Tibial artery (tissue), 4 donors: ENCODE measurements at regions of chr3 and their contacts with region 1.

Region 1: GRCh38 chr3:184371570-184372018 is 6.4 kb downstream of the THPO start:
- DNase-seq: peak; percentile 74 to 88
- H3K4me3 ChIP-seq: no peak overlapping the region
- H3K27ac ChIP-seq: no peak overlapping the region
- H3K4me1 ChIP-seq: peaks cover 0 to 39% (median 21%) of the 10 kb centered on the region in 4 donors
- H3K27me3 ChIP-seq: no peaks in the 10 kb centered on the region
- CTCF ChIP-seq: peak; percentile 94 to 97

Region 2: GRCh38 chr3:184250167-184250828 is 121.3 kb before region 1 on chr3:
- intact Hi-C with region 1: no loop called
- DNase-seq: peak; percentile 89 to 90
- H3K4me3 ChIP-seq: peak overlapping the region; percentile 70 to 71
- H3K27ac ChIP-seq: peak overlapping the region; percentile 67 to 82
- H3K4me1 ChIP-seq: peaks cover 0 to 21% (median 17%) of the 10 kb centered on the region in 4 donors
- H3K27me3 ChIP-seq: no peaks in the 10 kb centered on the region
- CTCF ChIP-seq: peak; percentile 77 to 94

Region 3: DNA sequence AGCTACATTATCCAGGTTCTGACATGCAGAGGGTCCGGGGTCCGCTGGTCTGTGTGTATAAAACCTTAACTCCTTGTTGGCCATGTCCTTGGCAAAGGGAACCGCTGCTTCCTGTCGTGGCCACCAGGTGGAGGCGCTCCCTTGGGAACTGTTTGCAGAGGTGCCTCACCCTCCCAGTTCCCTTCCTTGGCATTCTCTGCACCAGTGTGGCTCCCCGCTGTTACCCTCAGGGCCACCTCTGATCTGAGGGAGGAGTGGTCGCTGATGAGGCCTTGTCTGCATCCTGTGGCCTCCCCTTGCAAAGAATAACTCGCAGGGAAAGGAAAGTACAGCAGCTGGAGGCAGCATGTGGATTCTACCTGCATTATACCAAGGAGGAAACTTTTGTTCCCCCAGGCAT is 97.8 kb after region 1 on chr3:
- intact Hi-C with region 1: loop called (anchors 5 kb)
- DNase-seq: peak; percentile 28 to 61
- H3K4me3 ChIP-seq: no peak overlapping the region
- H3K27ac ChIP-seq: no peak overlapping the region
- H3K4me1 ChIP-seq: no peaks in the 10 kb centered on the region
- H3K27me3 ChIP-seq: peaks cover 0 to 21% of the 10 kb centered on the region in 2 donors
- CTCF ChIP-seq: peak; percentile 12 to 15

Region 4: DNA sequence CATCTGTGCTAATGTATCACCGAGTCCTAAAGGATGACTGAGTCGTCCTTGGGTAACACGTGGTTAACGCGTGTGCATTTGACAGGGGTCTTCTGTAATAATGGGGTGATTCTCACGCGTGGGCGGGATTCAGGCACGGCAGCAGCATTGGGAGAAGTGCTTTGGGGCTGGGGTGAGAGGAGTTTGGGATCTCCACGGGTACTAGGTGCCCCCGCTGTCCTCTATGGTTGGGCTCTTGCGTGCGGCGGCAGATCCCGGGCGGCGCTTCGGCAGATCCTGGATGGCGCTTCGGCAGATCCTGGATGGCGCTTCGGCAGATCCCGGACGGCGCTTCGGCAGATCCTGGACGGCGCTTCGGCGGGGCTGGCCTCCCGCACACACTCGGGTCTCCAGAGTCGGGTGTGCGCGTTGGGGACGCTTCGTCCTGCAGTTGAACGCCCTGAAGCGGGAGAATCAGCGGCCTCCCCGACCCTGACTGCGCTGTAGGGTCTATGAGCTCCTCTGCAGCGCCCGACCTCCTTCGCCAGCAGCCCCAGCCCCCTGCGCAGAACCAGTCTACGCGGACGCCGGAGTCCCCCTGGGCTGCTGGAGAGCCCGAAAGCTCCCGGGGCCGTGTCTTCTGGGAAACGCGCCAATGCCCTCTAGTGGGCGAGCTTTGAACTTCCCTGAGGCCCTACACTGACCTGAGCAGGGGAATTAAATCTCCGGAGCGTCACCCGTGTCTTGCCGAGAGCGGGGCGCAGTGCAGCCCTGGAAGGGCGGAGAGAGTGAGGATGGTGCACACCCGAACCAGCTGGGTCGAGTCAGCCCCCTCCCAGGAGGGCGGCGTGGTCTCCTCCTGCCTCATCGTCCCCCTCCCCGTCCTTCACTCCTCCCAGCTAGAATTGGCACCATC is 141.9 kb after region 1 on chr3:
- intact Hi-C with region 1: loop called (anchors 5 kb)
- DNase-seq: peak; percentile 86 to 87
- H3K4me3 ChIP-seq: peak overlapping the region; percentile 24 to 53
- H3K27ac ChIP-seq: no peak overlapping the region
- H3K4me1 ChIP-seq: peaks cover 0 to 12% (median 9%) of the 10 kb centered on the region in 4 donors
- H3K27me3 ChIP-seq: peaks cover 0 to 44% of the 10 kb centered on the region in 2 donors
- CTCF ChIP-seq: peak; percentile 78 to 92

Region 5: GRCh38 chr3:184543843-184544512 is 172.4 kb after region 1 on chr3:
- intact Hi-C with region 1: loop called (anchors 10 kb)
- DNase-seq: peak; percentile 67 to 77
- H3K4me3 ChIP-seq: no peak overlapping the region
- H3K27ac ChIP-seq: no peak overlapping the region
- H3K4me1 ChIP-seq: peaks cover 0 to 6% (median 3%) of the 10 kb centered on the region in 4 donors
- H3K27me3 ChIP-seq: peaks cover 0 to 48% of the 10 kb centered on the region in 2 donors
- CTCF ChIP-seq: peak; percentile 89 to 94